HepG2 (cell line): ENCODE measurements at regions of chrX and their contacts with region 1.

Region 1: DNA sequence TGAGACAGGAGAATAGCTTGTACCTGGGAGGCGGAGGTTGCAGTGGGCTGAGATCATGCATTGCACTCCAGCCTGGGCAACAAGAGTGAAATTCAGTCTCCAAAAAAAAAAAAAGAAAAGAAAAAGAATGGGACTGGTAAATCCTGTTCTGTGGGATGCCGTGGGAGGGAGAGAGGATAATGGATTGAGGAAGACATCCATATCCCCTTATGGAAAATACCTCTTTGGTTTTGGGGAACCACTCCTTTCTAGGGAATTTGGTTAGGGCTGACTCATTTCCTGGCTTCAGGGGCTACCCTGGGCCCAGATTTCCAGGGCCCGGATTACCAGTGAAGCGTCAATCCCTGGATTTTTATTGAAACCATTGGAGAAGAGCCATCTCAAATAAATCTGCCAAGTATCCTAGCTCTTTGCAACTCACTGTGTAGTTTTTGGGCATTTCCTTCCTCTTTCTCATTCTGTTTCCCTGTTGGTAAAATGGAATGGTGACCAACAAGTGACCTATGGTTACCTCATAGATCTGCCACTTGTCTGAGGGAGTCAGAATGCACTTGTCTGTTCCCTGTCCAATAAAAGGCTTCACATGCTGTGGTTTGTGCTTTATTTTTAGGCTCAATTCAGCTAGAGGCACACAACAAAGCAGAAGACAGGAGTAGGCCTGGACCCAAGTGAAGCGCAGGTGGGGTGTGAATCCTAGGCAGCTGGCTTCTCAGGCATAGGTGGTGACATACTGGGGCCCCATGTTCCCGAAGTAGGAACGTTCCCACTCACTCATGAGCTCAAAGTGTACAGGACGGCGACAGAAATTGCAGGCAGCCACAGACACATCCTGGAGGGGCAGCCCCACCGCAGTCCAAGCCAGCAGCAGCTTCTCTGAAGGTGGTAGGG is 8.6 kb downstream of the APEX2 start:
- DNase-seq: no peak
- ATAC-seq: no peak
- H3K4me3 ChIP-seq: no peak overlapping the region
- H3K27ac ChIP-seq: no peak overlapping the region
- H3K4me1 ChIP-seq: peaks cover 40% of the 10 kb centered on the region
- H3K27me3 ChIP-seq: no peaks in the 10 kb centered on the region
- CTCF ChIP-seq: no peak
- EP300 ChIP-seq: no peak
- POLR2A ChIP-seq: no peak
- RAD21 ChIP-seq: no peak

Region 2: GRCh38 chrX:54891573-54891972 is 117.1 kb before region 1 on chrX:
- CTCF ChIA-PET with region 1: interaction called, 6 read pairs
- POLR2A ChIA-PET with region 1: no interaction called
- in situ Hi-C with region 1: no loop called
- intact Hi-C with region 1: loop called (anchors 2 kb)
- DNase-seq: peak; percentile 21
- ATAC-seq: peak; percentile 69
- H3K4me3 ChIP-seq: no peak overlapping the region
- H3K27ac ChIP-seq: no peak overlapping the region
- H3K4me1 ChIP-seq: no peaks in the 10 kb centered on the region
- H3K27me3 ChIP-seq: no peaks in the 10 kb centered on the region
- CTCF ChIP-seq: peak; percentile 65
- EP300 ChIP-seq: no peak
- POLR2A ChIP-seq: no peak
- RAD21 ChIP-seq: peak; percentile 63; the same call in 1 of the 2 replicates

Region 3: GRCh38 chrX:54994668-54995351 is 13.9 kb before region 1 on chrX:
- CTCF ChIA-PET with region 1: no interaction called
- POLR2A ChIA-PET with region 1: interaction called, 21 read pairs
- in situ Hi-C with region 1: no loop called
- intact Hi-C with region 1: no loop called
- DNase-seq: no peak
- ATAC-seq: peak; percentile 62
- H3K4me3 ChIP-seq: peak overlapping the region in 1 of 3 experiments; percentile 62; a peak in 2 of 6 replicates
- H3K27ac ChIP-seq: peak overlapping the region; percentile 70
- H3K4me1 ChIP-seq: peaks cover 64% of the 10 kb centered on the region
- H3K27me3 ChIP-seq: no peaks in the 10 kb centered on the region; a peak in 1 of 5 replicates
- CTCF ChIP-seq: no peak
- EP300 ChIP-seq: no peak
- POLR2A ChIP-seq: no peak
- RAD21 ChIP-seq: no peak